Activated naive CD4-positive, alpha-beta T cell treated with anti-CD3 and anti-CD28 coated beads, Interleukin-2, amount 10 ng/mL, durations not matched to agents 7 days and 5 days (primary cell): ENCODE measurements at regions of chr5 and their contacts with region 1.

Region 1: GRCh38 chr5:111158105-111158744 is 66.0 kb upstream of the CAMK4 start:
- DNase-seq: peak; percentile 86
- H3K4me3 Mint-ChIP-seq: no peak overlapping the region
- H3K27ac Mint-ChIP-seq: no peak overlapping the region
- H3K4me1 Mint-ChIP-seq: peaks cover 2% of the 10 kb centered on the region
- H3K27me3 Mint-ChIP-seq: no peaks in the 10 kb centered on the region

Region 2: GRCh38 chr5:111223889-111224563 is 65.8 kb after region 1 on chr5 and contains the start of gene CAMK4:
- CTCF ChIA-PET with region 1: interaction called, 15 read pairs
- DNase-seq: peak; percentile 90
- H3K4me3 Mint-ChIP-seq: peak within 1 kb of the TSS; percentile 98
- H3K27ac Mint-ChIP-seq: peak within 1 kb of the TSS; percentile 92
- H3K4me1 Mint-ChIP-seq: peaks cover 29% of the 10 kb centered on the region
- H3K27me3 Mint-ChIP-seq: no peaks in the 10 kb centered on the region

Region 3: DNA sequence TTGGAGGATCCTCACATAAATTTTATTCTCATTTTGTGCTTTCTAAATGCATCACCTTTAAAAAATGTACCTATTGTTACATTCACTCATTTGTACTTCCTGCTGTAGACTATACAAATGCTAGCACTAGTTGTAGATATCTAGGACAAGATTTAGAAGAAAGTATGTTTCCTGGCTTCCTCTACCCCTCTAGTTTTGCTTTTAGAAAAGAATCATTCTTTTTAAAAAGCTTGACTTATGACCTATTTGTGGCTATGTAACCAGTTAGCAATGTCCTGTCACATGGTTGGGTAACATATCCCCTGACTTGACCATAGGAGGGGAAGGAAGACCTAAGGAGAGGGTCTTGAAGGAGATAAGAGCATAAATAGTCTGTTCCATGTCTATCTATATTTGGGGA is 79.2 kb after region 1 on chr5:
- CTCF ChIA-PET with region 1: interaction called, 11 read pairs
- DNase-seq: no peak
- H3K4me3 Mint-ChIP-seq: peak overlapping the region; percentile 42
- H3K27ac Mint-ChIP-seq: peak overlapping the region; percentile 91
- H3K4me1 Mint-ChIP-seq: peaks cover 87% of the 10 kb centered on the region
- H3K27me3 Mint-ChIP-seq: no peaks in the 10 kb centered on the region

Region 4: DNA sequence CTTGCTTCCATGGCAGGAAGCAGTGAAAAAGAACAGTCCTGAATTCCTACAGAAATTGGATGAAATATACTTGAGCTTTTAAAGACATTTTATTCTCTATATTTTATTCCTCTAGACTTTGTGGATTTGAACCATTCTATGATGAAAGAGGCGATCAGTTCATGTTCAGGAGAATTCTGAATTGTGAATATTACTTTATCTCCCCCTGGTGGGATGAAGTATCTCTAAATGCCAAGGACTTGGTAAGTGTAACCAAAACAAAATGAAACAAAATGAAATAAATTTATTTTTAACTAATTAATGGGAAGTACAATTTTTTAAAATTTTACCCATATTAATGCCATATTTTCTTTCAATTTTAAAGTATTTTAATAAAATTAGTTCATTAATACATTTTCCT is 320.0 kb after region 1 on chr5:
- CTCF ChIA-PET with region 1: interaction called, 15 read pairs
- DNase-seq: no peak
- H3K4me3 Mint-ChIP-seq: no peak overlapping the region
- H3K27ac Mint-ChIP-seq: no peak overlapping the region
- H3K4me1 Mint-ChIP-seq: no peaks in the 10 kb centered on the region
- H3K27me3 Mint-ChIP-seq: no peaks in the 10 kb centered on the region